ENCODE measurements at regions of chr6 and their contacts with region 1.

Region 1: DNA sequence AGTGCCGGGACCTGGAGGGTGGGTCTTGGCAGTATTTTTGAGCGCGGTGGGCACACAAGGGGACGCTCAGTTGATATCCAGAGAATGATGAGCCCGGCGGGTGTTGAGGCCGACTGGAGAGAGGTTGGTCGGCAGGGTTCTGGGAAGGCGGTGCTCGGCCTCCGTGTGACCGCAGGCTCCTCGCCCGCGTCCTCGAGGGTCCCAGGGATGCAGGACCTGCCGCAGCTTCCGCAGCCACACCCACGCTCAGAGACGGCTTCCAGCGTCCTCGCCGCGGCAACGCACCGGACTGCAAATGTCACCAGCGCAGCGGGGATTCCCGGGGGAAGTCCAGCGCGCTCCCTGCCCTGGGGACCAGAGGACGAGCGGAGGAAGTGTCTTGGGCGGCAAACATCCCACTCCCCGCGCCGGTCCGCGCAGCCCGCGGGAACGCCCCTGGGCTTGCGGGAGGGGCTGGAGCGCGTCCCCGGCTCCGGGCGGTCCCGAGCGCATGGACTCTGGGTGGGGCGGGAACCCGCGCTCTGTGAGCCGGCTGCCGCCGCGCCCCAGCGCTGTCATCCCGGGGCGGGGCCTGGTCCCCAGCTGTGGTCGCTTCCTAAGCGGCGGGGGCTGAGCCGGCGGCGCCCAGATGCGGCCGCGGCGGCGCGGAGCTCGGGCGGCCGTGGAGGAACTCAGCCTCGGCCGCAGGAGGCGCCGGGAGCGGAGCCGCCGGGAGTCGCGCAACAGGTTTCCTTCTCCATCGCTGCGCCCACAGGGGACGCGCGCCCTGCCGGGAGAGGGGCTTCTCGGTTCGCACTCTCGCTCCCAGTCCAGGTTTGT is at the start of gene STX11:
- DNase-seq: peak; percentile 27 to 89 (median 67)
- ATAC-seq: peak; percentile 56
- H3K4me3 ChIP-seq: peak within 1 kb of the TSS; percentile 68 to 71
- H3K4me3 Mint-ChIP-seq: peak within 1 kb of the TSS; percentile 94
- H3K27ac ChIP-seq: peak within 1 kb of the TSS; percentile 66 to 90
- H3K27ac Mint-ChIP-seq: peak within 1 kb of the TSS; percentile 95
- H3K4me1 ChIP-seq: peaks cover 5% of the 10 kb centered on the region
- H3K4me1 Mint-ChIP-seq: peaks cover 19% of the 10 kb centered on the region
- H3K27me3 ChIP-seq: no peaks in the 10 kb centered on the region
- H3K27me3 Mint-ChIP-seq: no peaks in the 10 kb centered on the region
- CTCF ChIP-seq: no peak
- total RNA-seq, gene STX11: 17.7 to 18.9 TPM

Region 2: GRCh38 chr6:143952947-143953701 is 197.0 kb before region 1 on chr6:
- CTCF ChIA-PET with region 1: no interaction called
- POLR2A ChIA-PET with region 1: no interaction called
- intact Hi-C with region 1: no loop called
- DNase-seq: no peak
- ATAC-seq: no peak
- H3K4me3 ChIP-seq: no peak overlapping the region
- H3K4me3 Mint-ChIP-seq: no peak overlapping the region
- H3K27ac ChIP-seq: no peak overlapping the region
- H3K27ac Mint-ChIP-seq: no peak overlapping the region
- H3K4me1 ChIP-seq: no peaks in the 10 kb centered on the region
- H3K4me1 Mint-ChIP-seq: no peaks in the 10 kb centered on the region
- H3K27me3 ChIP-seq: no peaks in the 10 kb centered on the region
- H3K27me3 Mint-ChIP-seq: no peaks in the 10 kb centered on the region
- CTCF ChIP-seq: no peak

Region 3: GRCh38 chr6:144063744-144064401 is 86.2 kb before region 1 on chr6:
- CTCF ChIA-PET with region 1: no interaction called
- POLR2A ChIA-PET with region 1: interaction called, 3 read pairs
- intact Hi-C with region 1: loop called in 1 of 2 experiments (anchors 2 kb)
- DNase-seq: peak; percentile 85 to 96 (median 91)
- ATAC-seq: peak; percentile 90
- H3K4me3 ChIP-seq: peak overlapping the region; percentile 93 to 97
- H3K4me3 Mint-ChIP-seq: peak overlapping the region; percentile 91
- H3K27ac ChIP-seq: peak overlapping the region; percentile 86 to 88
- H3K27ac Mint-ChIP-seq: peak overlapping the region; percentile 95
- H3K4me1 ChIP-seq: peaks cover 16% of the 10 kb centered on the region
- H3K4me1 Mint-ChIP-seq: peaks cover 30% of the 10 kb centered on the region
- H3K27me3 ChIP-seq: no peaks in the 10 kb centered on the region
- H3K27me3 Mint-ChIP-seq: no peaks in the 10 kb centered on the region
- CTCF ChIP-seq: no peak

Region 4: DNA sequence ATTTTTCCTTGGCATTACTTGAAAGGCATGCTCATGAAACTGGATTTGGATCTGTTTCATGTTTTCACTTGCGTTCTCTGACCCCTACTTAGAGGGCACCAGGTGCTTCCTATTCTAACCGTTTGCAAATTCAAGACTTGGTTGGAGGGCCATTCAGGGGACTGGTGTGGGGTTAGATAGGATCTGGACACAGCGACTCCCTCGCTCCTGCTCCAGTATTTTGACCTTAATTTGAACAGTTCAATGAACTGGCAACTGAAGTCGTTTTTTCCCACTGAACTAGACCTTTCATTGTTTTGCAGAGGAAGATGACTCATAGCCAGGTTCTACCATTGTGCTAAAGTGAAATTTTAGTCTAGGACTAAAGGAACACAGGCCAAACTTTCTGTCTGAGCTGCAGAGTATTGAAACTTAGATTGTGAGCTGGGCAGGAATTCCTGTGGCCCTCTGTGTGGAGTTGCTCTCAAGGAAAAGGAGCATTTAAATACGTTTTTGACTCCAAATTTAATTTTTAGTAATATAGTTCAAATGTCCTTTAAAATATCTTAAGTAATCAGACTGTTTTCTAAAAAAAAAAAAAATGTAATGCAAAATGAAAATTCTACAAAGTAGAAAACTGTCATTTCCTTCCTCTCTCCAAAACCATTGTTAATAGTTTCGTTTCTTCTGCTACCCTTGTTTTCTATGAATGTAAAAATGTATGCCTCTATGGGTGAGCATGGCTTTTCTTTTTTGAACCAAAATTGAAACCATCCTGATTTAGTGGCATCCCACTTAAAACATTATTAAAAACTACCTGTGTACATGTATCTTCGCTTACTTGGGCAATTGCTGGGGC is 199.8 kb after region 1 on chr6:
- CTCF ChIA-PET with region 1: no interaction called
- POLR2A ChIA-PET with region 1: no interaction called
- intact Hi-C with region 1: loop called (anchors 5 to 10 kb)
- DNase-seq: peak in 2 of 9 experiments; percentile 52 to 67
- ATAC-seq: peak; percentile 53
- H3K4me3 ChIP-seq: peak overlapping the region; percentile 8 to 29
- H3K4me3 Mint-ChIP-seq: peak overlapping the region; percentile 74
- H3K27ac ChIP-seq: peak overlapping the region; percentile 40 to 88
- H3K27ac Mint-ChIP-seq: peak overlapping the region; percentile 93
- H3K4me1 ChIP-seq: peaks cover 81% of the 10 kb centered on the region
- H3K4me1 Mint-ChIP-seq: peaks cover 90% of the 10 kb centered on the region
- H3K27me3 ChIP-seq: no peaks in the 10 kb centered on the region
- H3K27me3 Mint-ChIP-seq: no peaks in the 10 kb centered on the region
- CTCF ChIP-seq: no peak

Measured in CD8-positive, alpha-beta T cell (primary cell).